PC-3 (cell line): ENCODE measurements at regions of chr3 and their contacts with region 1.

Region 1: GRCh38 chr3:24680214-24680967 is 185.7 kb upstream of the THRB start:
- DNase-seq: peak; percentile 77
- ATAC-seq: peak; percentile 29; the same call in 1 of the 2 replicates
- H3K4me3 ChIP-seq: no peak overlapping the region
- H3K27ac ChIP-seq: no peak overlapping the region
- H3K4me1 ChIP-seq: peaks cover 37% of the 10 kb centered on the region
- H3K27me3 ChIP-seq: no peaks in the 10 kb centered on the region
- CTCF ChIP-seq: peak; percentile 95

Region 2: DNA sequence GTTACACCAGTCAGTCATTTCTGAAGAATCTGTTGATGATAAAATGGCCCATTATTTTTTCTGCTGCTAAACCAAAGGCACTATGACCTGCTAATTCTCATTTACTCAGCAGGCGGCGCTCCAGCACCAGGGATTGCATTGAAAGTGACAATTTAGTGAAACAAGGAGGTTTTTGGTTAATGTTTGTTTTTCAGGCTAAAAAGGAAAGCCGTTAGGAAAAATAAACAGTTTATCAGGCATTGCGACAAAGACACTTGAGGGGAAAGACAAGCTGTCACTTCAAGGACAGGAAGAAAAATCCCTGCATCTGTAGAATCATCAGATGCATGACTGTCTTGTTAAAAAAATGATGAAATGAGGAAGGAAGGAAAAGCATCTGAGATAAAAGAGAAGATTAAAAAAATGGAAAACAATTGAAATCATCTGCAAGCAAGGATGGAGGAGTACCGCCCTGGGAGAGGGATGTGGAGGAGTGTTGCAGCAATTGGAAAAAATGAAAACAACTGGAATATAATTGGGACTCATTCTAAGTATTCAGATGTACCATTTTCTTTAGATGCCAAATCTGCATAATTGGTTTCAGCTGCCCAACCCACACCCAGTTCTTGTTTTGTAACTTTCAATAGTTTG is 681.3 kb before region 1 on chr3:
- CTCF ChIA-PET with region 1: interaction called, 5 read pairs
- POLR2A ChIA-PET with region 1: no interaction called
- intact Hi-C with region 1: loop called (anchors 1 kb)
- DNase-seq: peak; percentile 86
- ATAC-seq: peak; percentile 55
- H3K4me3 ChIP-seq: no peak overlapping the region
- H3K27ac ChIP-seq: no peak overlapping the region
- H3K4me1 ChIP-seq: no peaks in the 10 kb centered on the region
- H3K27me3 ChIP-seq: no peaks in the 10 kb centered on the region
- CTCF ChIP-seq: peak; percentile 98

Region 3: DNA sequence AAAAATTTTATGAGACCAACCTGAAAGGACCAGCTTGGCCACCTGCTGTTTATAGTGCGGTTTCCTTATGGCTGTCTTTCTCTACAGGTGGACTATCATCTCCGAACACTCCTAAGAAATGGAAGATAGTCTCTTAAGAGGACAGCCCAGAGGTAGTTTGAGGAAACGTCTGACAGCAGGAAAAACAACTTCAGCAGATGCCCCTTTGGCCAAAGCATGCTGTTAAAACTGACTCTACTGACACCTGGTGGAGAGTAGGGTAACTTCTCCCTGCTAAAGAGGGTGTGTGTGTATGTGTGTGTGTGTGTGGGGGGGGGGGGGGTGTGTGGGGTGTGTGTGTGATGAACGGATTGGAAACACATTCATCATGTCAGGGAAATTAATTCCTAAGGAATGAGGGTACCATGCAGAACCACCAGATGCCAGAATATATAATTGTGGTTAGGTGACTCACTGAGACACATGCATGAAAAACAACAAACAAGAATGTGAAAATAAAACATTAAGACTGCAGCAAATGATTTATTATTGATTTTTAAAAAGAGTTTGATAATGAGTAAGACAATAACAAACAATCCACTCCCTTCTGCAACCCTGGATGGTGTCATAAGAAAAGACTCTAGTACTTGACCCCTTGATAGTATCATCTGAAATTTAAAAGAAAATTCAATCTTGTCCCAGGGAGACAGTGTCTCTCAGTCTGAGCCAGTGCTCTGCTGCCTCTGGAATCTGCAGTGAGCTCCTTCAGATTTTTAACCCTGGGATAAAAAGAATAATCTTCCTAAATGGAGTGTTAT is 442.2 kb before region 1 on chr3:
- CTCF ChIA-PET with region 1: interaction called, 3 read pairs
- POLR2A ChIA-PET with region 1: no interaction called
- intact Hi-C with region 1: loop called (anchors 1 kb)
- DNase-seq: peak; percentile 92
- ATAC-seq: peak; percentile 68
- H3K4me3 ChIP-seq: no peak overlapping the region
- H3K27ac ChIP-seq: peak overlapping the region; percentile 86
- H3K4me1 ChIP-seq: peaks cover 60% of the 10 kb centered on the region
- H3K27me3 ChIP-seq: no peaks in the 10 kb centered on the region
- CTCF ChIP-seq: peak; percentile 76

Region 4: GRCh38 chr3:24365194-24365612 is 315.2 kb before region 1 on chr3:
- CTCF ChIA-PET with region 1: no interaction called
- POLR2A ChIA-PET with region 1: no interaction called
- intact Hi-C with region 1: loop called (anchors 5 kb)
- DNase-seq: peak; percentile 98
- ATAC-seq: peak; percentile 100
- H3K4me3 ChIP-seq: peak overlapping the region; percentile 19; the same call in 1 of the 2 replicates
- H3K27ac ChIP-seq: peak overlapping the region; percentile 63
- H3K4me1 ChIP-seq: peaks cover 33% of the 10 kb centered on the region
- H3K27me3 ChIP-seq: no peaks in the 10 kb centered on the region
- CTCF ChIP-seq: peak; percentile 39

Region 5: DNA sequence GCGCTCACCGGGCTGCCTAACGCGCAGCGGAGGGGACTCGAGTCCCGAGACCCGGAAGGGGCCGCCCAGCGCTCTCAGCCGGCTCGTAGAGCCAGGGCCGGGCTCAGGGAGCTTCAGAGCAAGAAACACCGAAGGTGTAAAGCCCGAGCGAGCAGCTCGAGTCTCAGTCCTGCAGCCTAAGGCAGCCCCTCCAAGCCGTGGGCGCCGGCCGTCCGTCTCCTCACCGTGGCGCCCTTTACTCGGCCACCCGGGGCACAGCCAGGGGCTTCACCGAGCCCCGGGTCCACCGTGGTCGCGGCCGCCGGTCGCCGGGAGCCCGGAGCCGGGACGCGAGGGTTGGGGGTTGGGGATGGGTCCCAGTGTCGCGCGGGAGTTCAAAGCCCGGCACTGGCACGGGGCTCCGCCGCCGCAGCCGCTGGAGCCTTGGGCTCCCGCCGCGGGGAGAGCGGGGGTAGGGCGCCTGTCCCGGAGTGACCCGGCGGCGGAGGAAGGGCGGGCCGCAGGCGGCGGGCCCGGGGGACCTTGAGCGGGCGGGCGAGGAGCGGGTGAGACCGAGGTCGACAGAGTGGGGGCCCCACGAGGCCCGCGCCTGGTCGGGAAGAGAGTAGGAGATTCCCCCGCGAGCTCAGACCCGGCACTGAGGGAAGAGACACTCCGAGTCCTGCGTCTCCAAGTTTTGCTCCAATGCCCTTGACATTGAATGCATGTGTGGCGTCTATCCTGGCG is 158.8 kb before region 1 on chr3:
- CTCF ChIA-PET with region 1: interaction called, 4 read pairs
- POLR2A ChIA-PET with region 1: interaction called, 11 read pairs
- intact Hi-C with region 1: loop called (anchors 5 kb)
- DNase-seq: peak; percentile 35
- ATAC-seq: peak; percentile 55
- H3K4me3 ChIP-seq: peak overlapping the region; percentile 74
- H3K27ac ChIP-seq: peak overlapping the region; percentile 48
- H3K4me1 ChIP-seq: peaks cover 39% of the 10 kb centered on the region
- H3K27me3 ChIP-seq: no peaks in the 10 kb centered on the region
- CTCF ChIP-seq: peak; percentile 37; the same call in 1 of the 2 replicates

Region 6: GRCh38 chr3:24582431-24583403 is 97.7 kb before region 1 on chr3:
- CTCF ChIA-PET with region 1: no interaction called
- POLR2A ChIA-PET with region 1: no interaction called
- intact Hi-C with region 1: no loop called
- DNase-seq: peak; percentile 60
- ATAC-seq: peak; percentile 78
- H3K4me3 ChIP-seq: no peak overlapping the region
- H3K27ac ChIP-seq: no peak overlapping the region
- H3K4me1 ChIP-seq: no peaks in the 10 kb centered on the region
- H3K27me3 ChIP-seq: no peaks in the 10 kb centered on the region
- CTCF ChIP-seq: peak; percentile 73

Region 7: GRCh38 chr3:24622138-24622537 is 58.3 kb before region 1 on chr3:
- CTCF ChIA-PET with region 1: no interaction called
- POLR2A ChIA-PET with region 1: no interaction called
- intact Hi-C with region 1: no loop called
- DNase-seq: peak; percentile 87
- ATAC-seq: peak; percentile 100
- H3K4me3 ChIP-seq: no peak overlapping the region
- H3K27ac ChIP-seq: no peak overlapping the region
- H3K4me1 ChIP-seq: peaks cover 21% of the 10 kb centered on the region
- H3K27me3 ChIP-seq: no peaks in the 10 kb centered on the region
- CTCF ChIP-seq: no peak

Region 8: DNA sequence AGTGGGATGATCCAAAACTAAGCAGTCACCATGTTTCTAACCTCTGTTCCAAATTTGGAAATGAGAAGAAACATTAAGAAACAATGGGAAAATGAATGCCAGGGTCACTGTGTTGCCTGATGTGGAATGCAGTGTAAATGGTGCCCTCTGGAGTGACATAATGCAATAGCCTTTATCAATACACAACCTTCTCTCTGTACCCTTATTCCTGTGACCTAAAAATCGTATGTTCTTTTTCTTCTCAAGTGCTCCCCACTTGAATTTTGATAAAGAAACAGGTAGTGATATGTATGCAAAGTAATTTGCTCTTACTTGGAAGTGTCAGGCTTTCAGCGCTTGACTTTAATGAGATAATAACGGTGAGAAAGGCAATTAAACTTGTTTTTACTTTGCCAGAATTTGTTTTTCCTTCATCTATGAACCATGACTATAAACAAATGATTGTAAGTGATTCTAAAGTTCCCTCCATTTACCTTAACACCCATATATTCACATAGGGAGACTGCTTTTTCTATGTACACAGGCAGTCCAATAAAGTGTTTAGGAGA is 40.0 kb before region 1 on chr3:
- CTCF ChIA-PET with region 1: no interaction called
- POLR2A ChIA-PET with region 1: no interaction called
- intact Hi-C with region 1: loop called (anchors 1 kb)
- DNase-seq: peak; percentile 74
- ATAC-seq: peak; percentile 94
- H3K4me3 ChIP-seq: no peak overlapping the region
- H3K27ac ChIP-seq: no peak overlapping the region
- H3K4me1 ChIP-seq: peaks cover 16% of the 10 kb centered on the region
- H3K27me3 ChIP-seq: no peaks in the 10 kb centered on the region
- CTCF ChIP-seq: peak; percentile 95